MCF 10A (cell line): ENCODE measurements at regions of chr1 and their contacts with region 1.

Region 1: DNA sequence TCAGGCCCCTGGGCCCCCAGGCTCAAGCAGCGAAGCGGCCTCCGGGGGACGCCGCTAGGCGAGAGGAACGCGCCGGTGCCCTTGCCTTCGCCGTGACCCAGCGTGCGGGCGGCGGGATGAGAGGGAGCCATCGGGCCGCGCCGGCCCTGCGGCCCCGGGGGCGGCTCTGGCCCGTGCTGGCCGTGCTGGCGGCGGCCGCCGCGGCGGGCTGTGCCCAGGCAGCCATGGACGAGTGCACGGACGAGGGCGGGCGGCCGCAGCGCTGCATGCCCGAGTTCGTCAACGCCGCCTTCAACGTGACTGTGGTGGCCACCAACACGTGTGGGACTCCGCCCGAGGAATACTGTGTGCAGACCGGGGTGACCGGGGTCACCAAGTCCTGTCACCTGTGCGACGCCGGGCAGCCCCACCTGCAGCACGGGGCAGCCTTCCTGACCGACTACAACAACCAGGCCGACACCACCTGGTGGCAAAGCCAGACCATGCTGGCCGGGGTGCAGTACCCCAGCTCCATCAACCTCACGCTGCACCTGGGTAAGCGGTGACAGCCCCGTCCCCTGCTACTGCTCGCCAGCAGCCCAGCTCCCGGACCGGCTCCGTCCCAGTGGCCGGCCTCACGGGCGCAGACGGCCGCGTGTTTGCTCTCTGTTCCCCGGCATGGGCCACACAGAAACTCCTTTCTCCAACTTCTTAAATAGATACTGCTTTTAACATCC is 539 bp downstream of the LAMC1 start:
- DNase-seq: peak; percentile 90
- H3K4me3 Mint-ChIP-seq: peak overlapping the region; percentile 93
- H3K27ac Mint-ChIP-seq: peak overlapping the region; percentile 97
- H3K4me1 Mint-ChIP-seq: peaks cover 54% of the 10 kb centered on the region
- H3K27me3 Mint-ChIP-seq: no peaks in the 10 kb centered on the region
- CTCF ChIP-seq: peak; percentile 55

Region 2: DNA sequence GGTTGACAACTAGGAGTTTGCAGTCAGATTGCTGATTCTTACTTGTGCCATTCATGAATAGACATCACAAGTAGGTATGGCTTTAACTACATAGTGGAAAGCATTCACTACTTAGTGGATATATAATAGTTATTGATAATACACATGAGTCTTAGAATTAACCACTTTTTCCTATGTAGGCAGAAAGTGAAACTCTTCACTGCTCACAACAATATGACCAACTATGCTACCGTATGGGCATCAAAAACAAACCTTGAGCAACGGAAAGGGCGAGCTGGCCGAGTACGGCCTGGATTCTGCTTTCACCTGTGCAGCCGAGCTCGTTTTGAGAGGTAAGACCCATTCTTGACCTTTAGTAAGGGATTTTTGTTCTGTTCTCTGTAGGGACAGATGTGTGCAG is 145.9 kb before region 1 on chr1:
- CTCF ChIA-PET with region 1: no interaction called
- POLR2A ChIA-PET with region 1: no interaction called
- intact Hi-C with region 1: no loop called
- DNase-seq: no peak
- H3K4me3 Mint-ChIP-seq: no peak overlapping the region
- H3K27ac Mint-ChIP-seq: no peak overlapping the region
- H3K4me1 Mint-ChIP-seq: no peaks in the 10 kb centered on the region
- H3K27me3 Mint-ChIP-seq: no peaks in the 10 kb centered on the region
- CTCF ChIP-seq: no peak

Region 3: GRCh38 chr1:182953826-182954225 is 69.9 kb before region 1 on chr1:
- CTCF ChIA-PET with region 1: no interaction called
- POLR2A ChIA-PET with region 1: no interaction called
- intact Hi-C with region 1: no loop called
- DNase-seq: no peak
- H3K4me3 Mint-ChIP-seq: no peak overlapping the region
- H3K27ac Mint-ChIP-seq: no peak overlapping the region
- H3K4me1 Mint-ChIP-seq: peaks cover 5% of the 10 kb centered on the region
- H3K27me3 Mint-ChIP-seq: no peaks in the 10 kb centered on the region
- CTCF ChIP-seq: no peak

Region 4: DNA sequence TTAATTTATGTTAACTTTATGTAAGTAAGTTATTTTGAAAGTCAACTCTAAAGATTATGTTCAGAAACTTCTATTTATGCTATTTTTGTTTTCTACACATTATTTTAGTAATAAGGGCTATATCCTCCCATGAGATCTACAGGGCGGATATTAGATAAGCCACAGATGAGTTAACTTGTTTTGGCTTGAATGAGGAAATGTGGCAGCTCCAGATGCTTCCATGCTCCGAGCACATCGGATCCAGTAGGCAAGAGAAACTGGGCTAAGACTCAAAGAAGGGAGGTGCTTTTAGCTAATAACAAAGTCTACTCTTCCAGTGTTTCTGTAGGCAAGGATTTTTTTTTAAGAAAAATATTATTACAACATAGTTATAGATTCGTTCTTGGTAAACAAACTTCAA is 20.6 kb before region 1 on chr1:
- CTCF ChIA-PET with region 1: interaction called, 6 read pairs
- POLR2A ChIA-PET with region 1: interaction called, 13 read pairs
- intact Hi-C with region 1: no loop called
- DNase-seq: no peak
- H3K4me3 Mint-ChIP-seq: no peak overlapping the region
- H3K27ac Mint-ChIP-seq: no peak overlapping the region
- H3K4me1 Mint-ChIP-seq: peaks cover 10% of the 10 kb centered on the region
- H3K27me3 Mint-ChIP-seq: no peaks in the 10 kb centered on the region
- CTCF ChIP-seq: no peak

Region 5: GRCh38 chr1:183070923-183071618 is 47.3 kb after region 1 on chr1:
- CTCF ChIA-PET with region 1: interaction called, 3 read pairs
- POLR2A ChIA-PET with region 1: interaction called, 25 read pairs
- intact Hi-C with region 1: no loop called
- DNase-seq: peak; percentile 47
- H3K4me3 Mint-ChIP-seq: no peak overlapping the region
- H3K27ac Mint-ChIP-seq: peak overlapping the region; percentile 73
- H3K4me1 Mint-ChIP-seq: peaks cover 52% of the 10 kb centered on the region
- H3K27me3 Mint-ChIP-seq: no peaks in the 10 kb centered on the region
- CTCF ChIP-seq: no peak

Region 6: GRCh38 chr1:183093786-183094318 is 70.1 kb after region 1 on chr1:
- CTCF ChIA-PET with region 1: interaction called, 3 read pairs
- POLR2A ChIA-PET with region 1: interaction called, 20 read pairs
- intact Hi-C with region 1: loop called (anchors 2 kb)
- DNase-seq: peak; percentile 90
- H3K4me3 Mint-ChIP-seq: peak overlapping the region; percentile 2
- H3K27ac Mint-ChIP-seq: peak overlapping the region; percentile 4
- H3K4me1 Mint-ChIP-seq: peaks cover 39% of the 10 kb centered on the region
- H3K27me3 Mint-ChIP-seq: no peaks in the 10 kb centered on the region
- CTCF ChIP-seq: no peak

Region 7: DNA sequence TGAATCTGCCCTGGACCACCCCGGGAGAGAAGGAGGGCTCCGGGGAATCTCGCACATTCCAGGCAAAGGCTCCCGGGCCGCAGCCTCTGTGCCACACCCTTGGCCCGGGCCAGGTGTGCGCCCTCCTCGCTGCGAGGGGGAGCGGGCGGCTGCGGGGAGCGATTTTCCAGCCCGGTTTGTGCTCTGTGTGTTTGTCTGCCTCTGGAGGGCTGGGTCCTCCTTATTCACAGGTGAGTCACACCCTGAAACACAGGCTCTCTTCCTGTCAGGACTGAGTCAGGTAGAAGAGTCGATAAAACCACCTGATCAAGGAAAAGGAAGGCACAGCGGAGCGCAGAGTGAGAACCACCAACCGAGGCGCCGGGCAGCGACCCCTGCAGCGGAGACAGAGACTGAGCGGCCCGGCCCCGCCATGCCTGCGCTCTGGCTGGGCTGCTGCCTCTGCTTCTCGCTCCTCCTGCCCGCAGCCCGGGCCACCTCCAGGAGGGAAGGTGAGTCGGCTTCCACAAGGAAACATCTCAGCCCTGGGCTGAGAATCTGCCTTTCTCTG is 162.3 kb after region 1 on chr1 and contains the start of gene LAMC2:
- CTCF ChIA-PET with region 1: interaction called, 4 read pairs
- POLR2A ChIA-PET with region 1: interaction called, 39 read pairs
- intact Hi-C with region 1: loop called (anchors 1 kb)
- DNase-seq: peak; percentile 98
- H3K4me3 Mint-ChIP-seq: peak within 1 kb of the TSS; percentile 92
- H3K27ac Mint-ChIP-seq: peak within 1 kb of the TSS; percentile 98
- H3K4me1 Mint-ChIP-seq: peaks cover 36% of the 10 kb centered on the region
- H3K27me3 Mint-ChIP-seq: no peaks in the 10 kb centered on the region
- CTCF ChIP-seq: peak; percentile 70
- total RNA-seq, gene LAMC2: 751 and 884 TPM in 2 replicates

Region 8: DNA sequence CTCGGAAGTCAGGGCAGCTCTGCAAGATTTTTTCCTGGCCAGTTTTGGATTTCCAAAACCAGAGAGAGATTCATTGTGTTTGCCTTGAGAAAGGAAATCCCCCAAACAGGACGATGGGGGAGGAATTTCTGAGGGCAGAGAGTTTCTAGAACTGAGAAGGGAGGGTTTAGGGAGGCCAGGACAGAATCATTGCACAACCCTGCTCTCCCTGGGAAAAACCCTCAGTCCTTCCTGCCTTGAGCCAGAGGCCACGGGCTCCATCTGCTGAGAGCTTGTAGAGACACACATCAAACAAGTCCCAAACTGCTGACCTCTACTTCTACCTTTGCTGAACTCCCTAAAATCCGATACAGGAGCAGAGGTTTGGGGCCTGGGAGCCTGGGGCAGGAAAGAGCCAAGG is 294.7 kb after region 1 on chr1:
- CTCF ChIA-PET with region 1: interaction called, 4 read pairs
- POLR2A ChIA-PET with region 1: interaction called, 4 read pairs
- intact Hi-C with region 1: loop called (anchors 1 kb)
- DNase-seq: peak; percentile 95
- H3K4me3 Mint-ChIP-seq: no peak overlapping the region
- H3K27ac Mint-ChIP-seq: peak overlapping the region; percentile 60
- H3K4me1 Mint-ChIP-seq: peaks cover 26% of the 10 kb centered on the region
- H3K27me3 Mint-ChIP-seq: no peaks in the 10 kb centered on the region
- CTCF ChIP-seq: peak; percentile 79